ENCODE measurements at regions of chr5 and their contacts with region 1.

Region 1: GRCh38 chr5:116574367-116575325 is at the start of gene SEMA6A:
- DNase-seq: peak; percentile 99
- H3K4me3 Mint-ChIP-seq: peak within 1 kb of the TSS; percentile 96
- H3K27ac Mint-ChIP-seq: peak within 1 kb of the TSS; percentile 81
- H3K4me1 Mint-ChIP-seq: peaks cover 25% of the 10 kb centered on the region
- H3K27me3 Mint-ChIP-seq: no peaks in the 10 kb centered on the region
- CTCF ChIP-seq: no peak
- total RNA-seq, gene SEMA6A: 53.3 and 54.7 TPM in 2 replicates

Region 2: DNA sequence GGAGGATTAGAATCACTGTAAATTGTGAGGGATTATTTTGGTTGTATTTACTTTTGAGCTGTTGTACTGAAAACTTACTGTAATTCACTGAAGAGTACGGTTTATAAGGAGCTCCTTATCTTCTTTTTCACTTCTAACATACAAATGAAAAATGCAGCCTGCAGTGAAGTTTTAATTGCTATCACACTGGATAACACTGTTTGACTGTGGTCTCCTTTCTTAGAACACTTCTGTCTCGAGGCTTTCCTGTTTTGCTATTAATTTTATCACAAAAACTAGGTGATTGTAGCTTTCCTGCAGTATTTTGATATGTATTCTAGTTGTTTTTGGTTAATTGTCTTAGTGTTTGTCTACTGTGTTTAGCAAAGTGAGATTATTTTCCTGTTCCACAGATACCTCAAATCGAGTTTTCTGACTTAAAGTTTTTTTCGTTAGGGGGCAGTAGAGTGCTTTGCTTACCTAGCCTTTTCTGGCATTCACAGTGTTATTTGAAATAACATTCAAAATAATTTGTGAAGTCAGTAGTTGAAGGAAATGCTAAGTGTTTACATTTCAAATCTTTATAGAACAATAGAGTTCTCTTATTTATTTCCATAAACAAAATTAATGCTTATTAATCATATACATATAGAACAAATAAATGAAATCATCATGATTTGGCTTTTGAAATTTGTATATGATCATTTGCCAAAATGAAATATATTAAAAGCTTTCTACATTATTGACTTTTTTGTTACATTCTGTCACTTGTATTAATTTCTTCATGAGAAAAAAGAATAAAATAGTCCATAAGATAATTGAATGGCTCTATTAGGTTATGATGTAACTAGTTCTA is 436.9 kb before region 1 on chr5:
- CTCF ChIA-PET with region 1: no interaction called
- intact Hi-C with region 1: loop called (anchors 2 kb)
- DNase-seq: peak; percentile 36
- H3K4me3 Mint-ChIP-seq: no peak overlapping the region
- H3K27ac Mint-ChIP-seq: no peak overlapping the region
- H3K4me1 Mint-ChIP-seq: no peaks in the 10 kb centered on the region
- H3K27me3 Mint-ChIP-seq: no peaks in the 10 kb centered on the region
- CTCF ChIP-seq: peak; percentile 70

Region 3: DNA sequence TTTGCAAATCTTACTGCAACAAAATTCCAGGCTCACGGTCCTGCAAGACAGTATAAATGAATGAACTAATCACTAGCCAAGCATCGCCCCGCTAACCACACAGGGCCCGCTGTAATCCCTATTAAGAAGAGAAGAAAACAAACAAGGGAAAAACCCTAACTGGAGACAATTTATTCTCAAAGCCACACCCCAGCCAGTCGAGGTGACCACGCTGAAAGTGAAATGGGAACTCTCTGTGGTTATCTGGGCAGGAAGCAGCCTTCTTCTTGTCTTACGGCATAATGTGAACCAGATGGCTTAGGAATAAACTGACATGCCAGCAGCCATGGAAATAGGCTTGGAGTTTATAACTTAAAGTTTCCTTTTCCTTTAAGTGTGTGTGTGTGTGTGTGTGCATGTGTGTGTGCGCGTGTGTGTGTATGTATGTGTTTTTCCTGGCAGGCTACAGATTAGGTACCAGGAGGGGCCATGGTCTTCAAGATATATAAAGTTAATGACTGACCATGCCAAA is 120.2 kb before region 1 on chr5:
- CTCF ChIA-PET with region 1: interaction called, 3 read pairs
- intact Hi-C with region 1: loop called (anchors 5 kb)
- DNase-seq: no peak
- H3K4me3 Mint-ChIP-seq: no peak overlapping the region
- H3K27ac Mint-ChIP-seq: peak overlapping the region; percentile 21
- H3K4me1 Mint-ChIP-seq: peaks cover 42% of the 10 kb centered on the region
- H3K27me3 Mint-ChIP-seq: no peaks in the 10 kb centered on the region
- CTCF ChIP-seq: no peak

Region 4: DNA sequence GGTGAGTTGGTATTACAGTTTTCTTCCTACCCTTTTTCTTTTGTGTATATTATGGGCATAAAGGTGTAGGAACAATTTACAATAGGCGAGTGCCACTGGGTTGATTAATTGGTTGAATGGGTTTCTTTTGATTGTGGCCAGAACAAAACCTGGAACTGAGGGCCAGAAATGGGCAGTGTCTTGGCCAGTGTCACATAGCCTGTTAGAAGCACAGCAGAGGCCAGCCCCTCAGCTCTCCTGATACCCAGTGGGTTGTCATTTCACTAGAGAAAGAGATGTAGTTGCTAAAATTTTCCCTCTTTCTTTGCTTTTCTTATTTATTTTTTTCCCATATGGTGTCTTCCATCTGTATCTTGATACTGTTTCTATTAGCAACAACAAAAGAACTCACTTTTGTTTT is 38.8 kb after region 1 on chr5:
- CTCF ChIA-PET with region 1: interaction called, 13 read pairs
- intact Hi-C with region 1: loop called (anchors 1 kb)
- DNase-seq: no peak
- H3K4me3 Mint-ChIP-seq: peak overlapping the region; percentile 52
- H3K27ac Mint-ChIP-seq: peak overlapping the region; percentile 96
- H3K4me1 Mint-ChIP-seq: peaks cover 42% of the 10 kb centered on the region
- H3K27me3 Mint-ChIP-seq: no peaks in the 10 kb centered on the region
- CTCF ChIP-seq: no peak

Region 5: DNA sequence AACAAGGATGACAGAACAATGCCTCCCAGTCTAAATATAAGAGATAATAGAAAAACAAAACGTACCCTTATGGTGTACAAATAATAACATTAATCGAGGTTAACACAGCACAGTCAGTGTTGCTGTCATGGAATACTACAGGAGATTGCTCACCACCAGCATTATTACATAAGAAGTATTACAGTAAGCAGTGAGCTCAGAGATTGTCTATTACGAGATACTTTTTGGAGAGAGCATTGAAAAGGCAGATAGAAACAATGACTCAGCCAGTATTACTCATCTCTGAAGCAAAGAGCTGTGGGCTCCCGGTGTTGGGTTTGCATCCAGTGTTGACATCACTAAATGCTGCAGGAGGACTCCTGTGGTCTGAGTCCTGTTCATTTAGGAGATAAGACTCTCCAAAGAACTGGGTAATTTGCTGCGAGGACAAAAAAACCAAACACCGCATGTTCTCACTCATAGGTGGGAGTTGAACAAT is 191.9 kb after region 1 on chr5:
- CTCF ChIA-PET with region 1: interaction called, 20 read pairs
- intact Hi-C with region 1: loop called (anchors 2 kb)
- DNase-seq: peak; percentile 62
- H3K4me3 Mint-ChIP-seq: peak overlapping the region; percentile 35
- H3K27ac Mint-ChIP-seq: peak overlapping the region; percentile 79
- H3K4me1 Mint-ChIP-seq: peaks cover 34% of the 10 kb centered on the region
- H3K27me3 Mint-ChIP-seq: no peaks in the 10 kb centered on the region
- CTCF ChIP-seq: no peak

Region 6: GRCh38 chr5:116947691-116948528 is 373.3 kb after region 1 on chr5:
- CTCF ChIA-PET with region 1: interaction called, 29 read pairs
- intact Hi-C with region 1: loop called (anchors 1 kb)
- DNase-seq: peak; percentile 87
- H3K4me3 Mint-ChIP-seq: no peak overlapping the region
- H3K27ac Mint-ChIP-seq: no peak overlapping the region
- H3K4me1 Mint-ChIP-seq: peaks cover 18% of the 10 kb centered on the region
- H3K27me3 Mint-ChIP-seq: no peaks in the 10 kb centered on the region
- CTCF ChIP-seq: peak; percentile 83

Region 7: DNA sequence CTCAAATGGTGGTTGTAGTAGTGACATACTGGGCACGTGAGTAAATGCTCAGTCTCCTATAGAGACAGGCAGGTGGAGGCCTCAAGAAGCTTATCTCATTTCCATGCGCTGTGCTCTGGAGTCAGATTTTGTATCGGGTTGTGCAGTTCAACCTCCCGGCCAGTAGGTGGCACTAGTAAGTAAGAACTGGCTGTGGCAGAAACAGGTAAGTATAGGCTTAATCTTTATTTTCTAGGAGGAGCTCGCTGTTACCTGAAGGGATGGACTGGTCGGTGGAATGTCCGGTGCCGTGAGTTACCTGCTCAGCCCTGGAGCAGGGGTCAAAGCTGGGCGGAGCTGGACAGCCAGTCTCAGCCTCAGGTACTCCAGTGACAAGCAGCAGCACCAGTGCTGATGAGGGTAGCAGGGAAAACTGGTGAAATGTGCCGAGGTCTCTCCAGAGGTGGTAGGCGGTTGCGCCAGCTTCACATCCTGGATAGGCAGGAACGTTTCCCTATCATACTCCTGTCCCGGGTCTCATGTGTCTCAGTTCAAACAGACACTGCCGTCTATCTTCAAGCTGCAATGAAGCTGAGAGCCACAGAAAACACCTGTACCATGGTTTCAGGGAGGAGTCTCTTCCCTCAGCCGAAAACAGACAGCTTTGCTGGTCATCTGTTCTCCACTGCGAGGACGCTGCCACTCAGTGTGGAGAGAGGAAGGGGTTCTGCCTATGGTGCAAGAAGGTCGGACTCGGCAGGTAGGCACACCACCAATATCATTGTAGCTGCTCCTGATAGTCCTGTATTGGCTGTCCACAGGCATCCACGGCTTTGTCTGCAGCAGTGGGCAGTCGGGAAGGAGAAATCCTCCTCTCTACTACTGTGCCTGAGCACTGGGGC is 880.3 kb after region 1 on chr5:
- CTCF ChIA-PET with region 1: interaction called, 11 read pairs
- intact Hi-C with region 1: no loop called
- DNase-seq: peak; percentile 87
- H3K4me3 Mint-ChIP-seq: peak overlapping the region; percentile 79
- H3K27ac Mint-ChIP-seq: peak overlapping the region; percentile 75
- H3K4me1 Mint-ChIP-seq: peaks cover 9% of the 10 kb centered on the region
- H3K27me3 Mint-ChIP-seq: no peaks in the 10 kb centered on the region
- CTCF ChIP-seq: peak; percentile 90